AG04449 (cell line): ENCODE measurements at regions of chr15 and their contacts with region 1.

Region 1: GRCh38 chr15:28033443-28033842 is 65.7 kb downstream of the OCA2 start:
- DNase-seq: no peak
- H3K4me3 ChIP-seq: no peak overlapping the region
- CTCF ChIP-seq: no peak

Region 2: DNA sequence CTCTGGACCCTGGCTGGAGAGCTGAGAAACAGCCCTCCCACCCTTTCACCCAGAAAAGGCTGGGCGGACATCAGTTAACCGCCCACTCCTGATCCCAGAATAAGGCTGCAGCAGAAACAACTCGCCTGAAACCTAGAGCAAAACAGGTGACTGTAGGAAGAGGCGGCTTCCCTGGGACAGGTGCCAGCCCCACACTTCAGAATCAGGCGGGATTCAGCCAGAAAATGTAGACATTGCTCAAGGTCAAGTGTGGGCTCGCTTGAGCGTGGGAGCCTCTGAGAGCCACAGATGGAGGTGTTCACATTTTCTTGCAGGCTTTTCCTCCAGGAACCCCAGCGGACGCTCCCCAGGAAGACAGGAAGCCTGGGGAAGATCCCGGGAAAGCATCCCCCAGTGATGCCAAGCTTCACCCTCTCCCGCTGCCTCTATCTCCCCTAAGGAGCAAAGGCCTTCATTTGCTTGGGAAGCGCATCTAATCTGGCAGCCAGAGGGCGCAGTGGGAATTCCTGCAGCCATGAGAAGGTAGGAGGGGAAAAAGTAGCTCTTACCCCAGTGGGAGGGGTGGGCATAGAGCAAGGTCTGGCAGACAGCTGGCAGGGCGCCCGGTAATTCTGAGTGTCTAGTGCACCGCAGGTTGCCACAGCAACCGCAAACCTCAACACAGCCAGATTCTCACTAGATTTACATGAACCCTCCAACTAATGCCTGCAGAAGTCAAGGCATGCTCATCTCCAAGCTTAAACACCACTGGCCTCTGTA is 12.0 kb before region 1 on chr15:
- CTCF ChIA-PET with region 1: interaction called, 12 read pairs
- POLR2A ChIA-PET with region 1: no interaction called
- DNase-seq: peak; percentile 51
- H3K4me3 ChIP-seq: no peak overlapping the region
- CTCF ChIP-seq: peak; percentile 64